HCT116 (cell line): ENCODE measurements at regions of chr20 and their contacts with region 1.

Region 1: GRCh38 chr20:4956200-4956810 is 45.0 kb downstream of the SLC23A2 start:
- DNase-seq: peak; percentile 34
- ATAC-seq: peak; percentile 66
- H3K4me3 ChIP-seq: no peak overlapping the region
- H3K27ac ChIP-seq: no peak overlapping the region
- H3K4me1 ChIP-seq: peaks cover 12 to 30% of the 10 kb centered on the region in 2 experiments
- H3K27me3 ChIP-seq: no peaks in the 10 kb centered on the region
- CTCF ChIP-seq: peak; percentile 72 to 90 (median 74)
- POLR2A ChIP-seq: no peak
- RAD21 ChIP-seq: peak; percentile 81

Region 2: DNA sequence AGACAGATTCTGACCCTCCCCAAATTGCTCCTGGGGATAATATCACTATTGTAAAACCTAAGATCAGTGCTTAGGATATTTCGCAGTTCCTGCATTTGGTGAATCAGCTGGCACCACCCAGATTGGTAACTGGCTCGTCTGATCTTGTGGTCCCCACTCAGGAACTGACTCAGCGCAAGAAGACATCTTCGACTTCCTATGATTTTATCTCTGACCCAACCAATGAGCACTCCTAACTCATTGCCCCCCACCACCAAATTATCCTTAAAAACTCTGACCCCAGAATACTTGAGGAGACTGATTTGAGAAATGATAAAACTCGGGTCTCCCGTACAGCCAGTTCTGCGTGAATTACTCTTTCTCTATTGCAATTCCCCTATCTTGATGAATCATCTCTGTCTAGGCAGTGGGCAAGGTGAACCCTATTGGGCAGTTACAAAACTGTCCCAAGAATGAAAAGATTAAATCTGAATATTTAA is 290.3 kb before region 1 on chr20:
- CTCF ChIA-PET with region 1: no interaction called
- POLR2A ChIA-PET with region 1: no interaction called
- RAD21 ChIA-PET with region 1: no interaction called
- intact Hi-C with region 1: no loop called
- DNase-seq: no peak
- ATAC-seq: no peak
- H3K4me3 ChIP-seq: no peak overlapping the region
- H3K27ac ChIP-seq: no peak overlapping the region
- H3K4me1 ChIP-seq: peaks cover 0 to 7% of the 10 kb centered on the region in 2 experiments; a peak in 1 of 4 replicates
- H3K27me3 ChIP-seq: no peaks in the 10 kb centered on the region
- CTCF ChIP-seq: no peak
- POLR2A ChIP-seq: no peak
- RAD21 ChIP-seq: no peak

Region 3: DNA sequence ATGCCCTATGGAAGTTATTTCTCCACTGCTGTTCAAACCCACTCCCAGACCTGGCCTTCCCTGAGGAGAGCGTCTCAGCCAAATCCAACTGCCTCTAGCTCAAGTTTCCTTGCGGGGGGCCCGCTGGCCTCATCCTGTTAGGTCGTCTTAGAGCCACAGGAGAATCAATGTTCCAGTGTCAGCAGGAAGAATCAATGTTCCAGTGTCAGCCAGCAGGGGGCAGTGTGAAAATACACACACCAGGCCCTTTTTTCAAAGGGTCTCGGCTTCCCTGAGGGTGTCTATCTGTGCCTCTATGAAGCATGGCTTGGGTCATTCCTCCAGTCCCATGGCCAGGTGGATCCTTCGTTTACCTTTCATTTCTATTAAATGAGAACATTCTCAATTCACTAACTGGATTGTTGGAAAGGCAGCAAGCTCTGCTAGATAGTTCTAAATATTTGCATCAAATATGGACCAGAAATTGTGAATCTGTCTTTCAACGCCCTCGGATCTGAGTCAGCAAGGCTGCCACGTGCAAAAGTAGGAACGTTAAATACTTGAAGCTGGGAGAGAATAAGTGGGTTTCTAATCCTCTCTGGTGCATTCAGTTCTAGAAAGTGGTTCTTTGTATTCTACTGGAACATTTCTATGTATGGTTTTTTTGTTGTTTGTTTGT is 215.4 kb before region 1 on chr20:
- CTCF ChIA-PET with region 1: interaction called, 11 read pairs
- POLR2A ChIA-PET with region 1: no interaction called
- RAD21 ChIA-PET with region 1: no interaction called
- intact Hi-C with region 1: no loop called
- DNase-seq: peak; percentile 32
- ATAC-seq: peak; percentile 87
- H3K4me3 ChIP-seq: no peak overlapping the region
- H3K27ac ChIP-seq: no peak overlapping the region
- H3K4me1 ChIP-seq: no peaks in the 10 kb centered on the region
- H3K27me3 ChIP-seq: no peaks in the 10 kb centered on the region
- CTCF ChIP-seq: peak; percentile 46 to 93 (median 79)
- POLR2A ChIP-seq: no peak
- RAD21 ChIP-seq: peak; percentile 58

Region 4: GRCh38 chr20:4966826-4967751 is 10.8 kb after region 1 on chr20:
- CTCF ChIA-PET with region 1: interaction called, 12 read pairs
- POLR2A ChIA-PET with region 1: no interaction called
- RAD21 ChIA-PET with region 1: no interaction called
- intact Hi-C with region 1: loop called (anchors 1 kb)
- DNase-seq: no peak
- ATAC-seq: no peak
- H3K4me3 ChIP-seq: no peak overlapping the region
- H3K27ac ChIP-seq: no peak overlapping the region
- H3K4me1 ChIP-seq: peaks cover 0 to 4% of the 10 kb centered on the region in 2 experiments; a peak in 1 of 4 replicates
- H3K27me3 ChIP-seq: no peaks in the 10 kb centered on the region
- CTCF ChIP-seq: no peak
- POLR2A ChIP-seq: no peak
- RAD21 ChIP-seq: no peak

Region 5: GRCh38 chr20:5100684-5101347 is 144.5 kb after region 1 on chr20:
- CTCF ChIA-PET with region 1: interaction called, 3 read pairs
- POLR2A ChIA-PET with region 1: no interaction called
- RAD21 ChIA-PET with region 1: no interaction called
- intact Hi-C with region 1: loop called (anchors 5 kb)
- DNase-seq: peak; percentile 39
- ATAC-seq: peak; percentile 94
- H3K4me3 ChIP-seq: no peak overlapping the region
- H3K27ac ChIP-seq: peak overlapping the region; percentile 41; the same call in 1 of the 2 replicates
- H3K4me1 ChIP-seq: no peaks in the 10 kb centered on the region
- H3K27me3 ChIP-seq: no peaks in the 10 kb centered on the region
- CTCF ChIP-seq: peak; percentile 71 to 87 (median 73)
- POLR2A ChIP-seq: no peak
- RAD21 ChIP-seq: peak; percentile 85